Activated B cell treated with CpG ODN at 0.5 μM for 24 hours (primary cell): ENCODE measurements at regions of chr5 and their contacts with region 1.

Region 1: DNA sequence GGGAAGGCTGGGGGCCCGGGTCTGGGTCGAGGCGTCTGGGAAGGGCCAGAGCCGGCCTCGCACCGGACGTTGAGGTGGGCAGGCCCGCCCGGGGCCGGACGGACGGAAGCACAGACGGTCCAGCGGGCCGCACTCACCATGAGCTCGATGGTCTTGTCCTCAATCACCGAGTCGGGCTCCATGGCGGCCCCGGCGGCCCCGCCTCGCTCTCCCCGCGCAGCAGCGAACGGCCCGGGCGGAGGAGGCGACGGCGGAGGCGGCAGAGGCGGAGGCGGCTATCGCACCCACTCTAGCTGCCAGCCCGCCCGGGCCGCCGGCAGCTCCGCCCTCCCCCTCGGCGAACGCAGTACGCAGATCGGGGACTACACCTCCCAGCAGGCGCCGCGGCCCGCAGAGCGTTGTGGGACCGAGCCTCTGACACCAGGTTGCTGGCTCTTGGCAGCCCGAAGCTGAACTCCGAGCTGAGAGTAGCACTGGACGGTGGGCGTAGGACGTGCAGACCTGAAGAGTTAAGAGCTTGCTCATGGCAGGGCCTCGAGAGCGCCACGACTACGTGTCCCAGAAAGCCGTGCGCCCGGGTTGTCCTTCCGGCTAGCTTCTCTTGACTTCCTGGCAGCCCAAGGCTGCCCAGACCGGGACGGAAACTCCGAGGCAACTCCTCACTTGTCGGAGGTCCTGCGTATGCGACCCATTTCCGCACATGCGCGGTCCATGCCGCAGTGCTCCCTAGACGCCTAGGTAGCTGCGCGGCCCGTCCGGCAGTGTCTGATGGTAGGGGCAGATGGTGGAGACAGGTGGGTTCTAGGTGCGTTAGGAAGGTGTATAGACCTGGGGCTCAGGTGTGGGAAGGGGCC is at the start of gene FBXW11:
- DNase-seq: peak; percentile 87
- ATAC-seq: peak; percentile 84
- H3K4me3 Mint-ChIP-seq: peak within 1 kb of the TSS; percentile 93
- H3K27ac Mint-ChIP-seq: peak within 1 kb of the TSS; percentile 96
- H3K4me1 Mint-ChIP-seq: peaks cover 51% of the 10 kb centered on the region
- H3K27me3 Mint-ChIP-seq: no peaks in the 10 kb centered on the region
- CTCF ChIP-seq: no peak
- total RNA-seq, gene FBXW11: 46.5 and 52.7 TPM in 2 replicates

Region 2: GRCh38 chr5:171913987-171914273 is 92.6 kb before region 1 on chr5:
- CTCF ChIA-PET with region 1: interaction called, 61 read pairs
- POLR2A ChIA-PET with region 1: interaction called, 25 read pairs
- intact Hi-C with region 1: loop called (anchors 1 kb)
- DNase-seq: no peak
- ATAC-seq: no peak
- H3K4me3 Mint-ChIP-seq: no peak overlapping the region
- H3K27ac Mint-ChIP-seq: peak overlapping the region; percentile 36
- H3K4me1 Mint-ChIP-seq: peaks cover 71% of the 10 kb centered on the region
- H3K27me3 Mint-ChIP-seq: no peaks in the 10 kb centered on the region
- CTCF ChIP-seq: no peak

Region 3: GRCh38 chr5:171978519-171978918 is 28.0 kb before region 1 on chr5:
- CTCF ChIA-PET with region 1: no interaction called
- POLR2A ChIA-PET with region 1: interaction called, 8 read pairs
- intact Hi-C with region 1: loop called (anchors 2 kb)
- DNase-seq: no peak
- ATAC-seq: peak; percentile 81
- H3K4me3 Mint-ChIP-seq: peak overlapping the region; percentile 65
- H3K27ac Mint-ChIP-seq: peak overlapping the region; percentile 86
- H3K4me1 Mint-ChIP-seq: peaks cover 85% of the 10 kb centered on the region
- H3K27me3 Mint-ChIP-seq: no peaks in the 10 kb centered on the region
- CTCF ChIP-seq: no peak

Region 4: DNA sequence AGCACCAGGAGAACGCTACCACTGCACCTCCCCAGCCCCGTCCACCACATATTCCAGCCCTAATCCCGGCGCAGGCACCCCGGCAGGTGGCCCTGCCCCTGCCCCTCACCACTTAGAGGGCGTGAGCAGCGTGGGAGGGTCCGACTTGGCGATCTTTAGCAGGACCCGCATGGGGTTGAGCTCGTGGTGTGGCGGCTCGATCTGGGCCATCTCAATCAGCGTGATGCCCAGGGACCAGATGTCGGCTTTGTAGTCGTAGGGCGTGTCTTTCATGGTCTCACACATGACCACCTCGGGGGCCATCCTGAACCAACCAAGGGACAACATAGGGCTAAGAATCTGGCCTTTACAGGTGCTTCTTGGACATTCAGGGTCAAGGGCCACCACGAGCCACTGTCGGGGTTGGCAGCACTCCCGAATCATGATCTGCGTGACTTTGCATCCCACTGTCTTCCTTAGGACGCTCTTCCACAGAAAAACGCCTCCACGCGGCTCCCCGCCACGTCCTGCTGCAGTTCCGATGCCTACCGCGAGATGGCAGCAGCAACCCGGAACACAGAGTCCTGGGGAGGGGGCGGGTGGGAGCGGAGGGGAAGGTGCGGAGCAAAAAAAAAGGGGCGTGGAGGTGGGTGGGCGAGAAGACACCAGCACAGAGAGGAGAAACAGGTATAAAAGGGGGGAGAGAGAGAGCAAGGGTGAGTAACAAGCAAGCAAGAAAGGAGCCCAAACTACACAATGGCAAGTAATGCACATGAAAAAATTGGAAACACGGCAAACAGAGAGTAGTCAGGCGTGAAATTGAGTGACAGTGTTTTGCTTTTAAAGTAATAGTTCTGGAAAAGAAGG is 100.2 kb after region 1 on chr5:
- CTCF ChIA-PET with region 1: no interaction called
- POLR2A ChIA-PET with region 1: interaction called, 4 read pairs
- intact Hi-C with region 1: loop called (anchors 2 kb)
- DNase-seq: peak; percentile 71
- ATAC-seq: no peak
- H3K4me3 Mint-ChIP-seq: no peak overlapping the region
- H3K27ac Mint-ChIP-seq: peak overlapping the region; percentile 68
- H3K4me1 Mint-ChIP-seq: peaks cover 41% of the 10 kb centered on the region
- H3K27me3 Mint-ChIP-seq: no peaks in the 10 kb centered on the region
- CTCF ChIP-seq: peak; percentile 34

Region 5: DNA sequence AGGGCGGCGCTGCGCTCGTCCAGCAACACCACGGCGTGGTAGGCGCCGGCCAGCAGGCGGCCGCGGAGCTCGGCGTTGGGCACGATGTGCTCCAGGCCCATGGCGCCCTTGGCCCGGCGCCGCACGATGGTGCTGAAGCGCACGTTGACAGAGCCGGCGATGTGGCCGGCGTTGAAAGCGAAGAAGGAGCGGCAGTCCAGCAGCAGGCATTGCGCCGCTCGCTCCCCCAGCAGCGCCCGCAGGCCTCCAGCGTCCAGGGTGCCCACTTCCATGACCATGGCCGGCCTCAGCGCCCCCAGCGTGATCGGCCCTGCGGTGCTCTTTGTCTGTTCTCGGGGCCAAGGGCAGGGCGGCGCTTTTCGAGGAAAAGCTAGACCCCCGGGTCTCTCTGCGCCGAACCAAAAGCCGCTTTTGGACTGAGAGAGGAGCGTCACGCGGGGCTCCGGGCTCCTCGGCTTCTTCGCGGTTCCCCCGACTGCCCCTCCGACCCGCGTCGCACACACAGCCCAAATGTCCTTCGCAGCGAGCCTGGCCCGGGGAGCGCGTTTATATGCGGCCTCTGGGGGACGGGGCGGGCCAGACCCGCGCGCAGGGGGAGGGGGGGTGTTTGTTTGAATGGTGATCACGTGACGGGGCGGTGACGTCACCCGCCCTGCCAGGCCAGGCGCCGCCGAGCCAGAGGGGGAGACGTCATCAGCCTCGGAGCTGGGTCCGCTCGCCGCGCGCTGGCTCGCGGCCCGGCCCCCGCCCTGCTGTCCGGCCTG is 764.3 kb after region 1 on chr5 and contains the start of gene DUSP1:
- CTCF ChIA-PET with region 1: no interaction called
- POLR2A ChIA-PET with region 1: interaction called, 4 read pairs
- intact Hi-C with region 1: loop called (anchors 5 kb)
- DNase-seq: peak; percentile 96
- ATAC-seq: peak; percentile 53
- H3K4me3 Mint-ChIP-seq: peak within 1 kb of the TSS; percentile 92
- H3K27ac Mint-ChIP-seq: peak within 1 kb of the TSS; percentile 99
- H3K4me1 Mint-ChIP-seq: peaks cover 73% of the 10 kb centered on the region
- H3K27me3 Mint-ChIP-seq: no peaks in the 10 kb centered on the region
- CTCF ChIP-seq: no peak
- total RNA-seq, gene DUSP1: 15.0 and 21.2 TPM in 2 replicates

Region 6: GRCh38 chr5:173917788-173918786 is 1911.5 kb after region 1 on chr5:
- CTCF ChIA-PET with region 1: no interaction called
- POLR2A ChIA-PET with region 1: no interaction called
- intact Hi-C with region 1: loop called (anchors 5 kb)
- DNase-seq: no peak
- ATAC-seq: peak; percentile 92
- H3K4me3 Mint-ChIP-seq: no peak overlapping the region
- H3K27ac Mint-ChIP-seq: no peak overlapping the region
- H3K4me1 Mint-ChIP-seq: peaks cover 24% of the 10 kb centered on the region
- H3K27me3 Mint-ChIP-seq: no peaks in the 10 kb centered on the region
- CTCF ChIP-seq: no peak